ENCODE measurements at regions of chr17 and their contacts with region 1.

Region 1: DNA sequence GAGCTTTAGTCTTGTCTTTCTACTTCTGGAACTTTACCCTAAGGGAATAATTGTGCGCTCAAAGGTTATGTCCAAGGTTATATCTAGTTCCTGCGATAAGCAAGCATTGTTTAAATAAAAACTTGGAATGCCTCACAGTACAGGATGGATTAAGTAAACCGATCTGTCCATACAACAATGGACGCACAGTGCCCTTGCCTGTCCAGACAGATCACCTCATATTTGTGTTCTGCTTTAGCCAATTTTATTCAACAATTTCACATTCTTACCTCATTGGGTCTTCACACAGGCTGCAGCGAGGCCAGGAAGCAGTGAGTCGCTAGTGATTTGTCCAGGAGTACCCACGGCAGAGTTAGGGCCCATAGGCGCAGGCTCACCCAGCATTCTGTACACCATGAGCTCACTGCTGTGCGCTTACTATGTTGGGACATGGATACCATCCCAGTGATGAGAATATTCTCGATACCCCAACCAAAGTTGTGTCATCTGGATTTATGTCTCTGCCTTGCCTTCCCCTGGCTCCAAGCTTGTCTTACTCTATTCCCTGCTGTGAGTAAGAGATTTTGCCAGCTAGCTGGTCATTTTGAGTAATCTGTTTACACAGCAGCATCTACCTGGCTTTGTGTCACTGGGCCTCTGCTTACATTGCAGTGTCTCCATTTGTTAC is 39.8 kb downstream of the USP43 start:
- DNase-seq: no peak

Region 2: GRCh38 chr17:9628509-9628908 is 56.6 kb before region 1 on chr17:
- intact Hi-C with region 1: loop called (anchors 10 kb)
- DNase-seq: peak in 4 of 10 donors; percentile 18 to 84 (median 49)